Psoas muscle (tissue), 8 donors: ENCODE measurements at regions of chr17 and their contacts with region 1.

Region 1: GRCh38 chr17:44473367-44473766 is 29.8 kb downstream of the GPATCH8 start:
- DNase-seq: no peak
- ATAC-seq: peak in 2 of 4 donors; percentile 59 to 70
- H3K4me3 ChIP-seq: no peak overlapping the region
- H3K27ac ChIP-seq: no peak overlapping the region
- H3K4me1 ChIP-seq: peaks cover 28% of the 10 kb centered on the region
- H3K27me3 ChIP-seq: no peaks in the 10 kb centered on the region
- CTCF ChIP-seq: no peak

Region 2: GRCh38 chr17:44350733-44351226 is 122.6 kb before region 1 on chr17:
- intact Hi-C with region 1: no loop called
- DNase-seq: peak; percentile 60 to 75
- ATAC-seq: peak; percentile 57 to 68 (median 64)
- H3K4me3 ChIP-seq: no peak overlapping the region
- H3K27ac ChIP-seq: no peak overlapping the region
- H3K4me1 ChIP-seq: no peaks in the 10 kb centered on the region
- H3K27me3 ChIP-seq: peaks cover 0 to 1% (median 0%) of the 10 kb centered on the region in 3 donors
- CTCF ChIP-seq: peak; percentile 59

Region 3: GRCh38 chr17:44444735-44445105 is 28.6 kb before region 1 on chr17:
- intact Hi-C with region 1: loop called in 1 of 2 experiments (anchors 5 kb)
- DNase-seq: no peak
- ATAC-seq: peak in 2 of 4 donors; percentile 52 to 62
- H3K4me3 ChIP-seq: no peak overlapping the region
- H3K27ac ChIP-seq: peak overlapping the region; percentile 53
- H3K4me1 ChIP-seq: peaks cover 16% of the 10 kb centered on the region
- H3K27me3 ChIP-seq: no peaks in the 10 kb centered on the region
- CTCF ChIP-seq: no peak

Region 4: DNA sequence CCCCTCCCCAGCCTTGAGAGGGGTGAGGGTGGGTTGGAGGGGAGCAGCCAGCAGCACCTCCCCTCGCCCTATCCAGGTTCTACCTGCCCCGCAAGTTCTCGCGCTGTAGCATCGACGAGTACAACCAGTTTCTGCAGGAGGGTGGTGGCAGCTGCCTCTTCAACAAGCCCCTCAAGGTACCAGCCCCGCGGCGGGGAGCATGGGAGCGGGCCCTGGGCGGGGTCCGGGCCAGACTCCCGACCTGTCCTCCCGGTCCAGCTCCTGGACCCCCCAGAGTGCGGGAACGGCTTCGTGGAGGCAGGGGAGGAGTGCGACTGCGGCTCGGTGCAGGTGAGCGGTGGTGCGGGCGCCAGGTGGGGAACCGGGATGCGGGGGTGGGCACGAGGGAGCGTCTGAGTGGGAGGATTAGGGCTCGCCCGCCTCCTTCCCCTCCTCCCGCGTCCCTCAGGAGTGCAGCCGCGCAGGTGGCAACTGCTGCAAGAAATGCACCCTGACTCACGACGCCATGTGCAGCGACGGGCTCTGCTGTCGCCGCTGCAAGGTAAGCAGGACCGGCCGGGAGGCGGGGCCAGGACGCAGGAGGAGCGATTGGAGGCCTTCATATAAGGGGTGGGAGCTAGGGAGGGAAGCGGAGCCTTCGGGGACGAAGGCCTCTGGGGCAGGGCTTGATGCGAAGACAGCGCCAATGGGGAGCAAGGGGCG is 301.9 kb after region 1 on chr17:
- intact Hi-C with region 1: no loop called
- DNase-seq: peak; percentile 93 to 96
- ATAC-seq: peak; percentile 93 to 96 (median 95)
- H3K4me3 ChIP-seq: peak overlapping the region; percentile 66
- H3K27ac ChIP-seq: no peak overlapping the region
- H3K4me1 ChIP-seq: peaks cover 14% of the 10 kb centered on the region
- H3K27me3 ChIP-seq: peaks cover 0 to 20% (median 0%) of the 10 kb centered on the region in 3 donors
- CTCF ChIP-seq: no peak

Region 5: DNA sequence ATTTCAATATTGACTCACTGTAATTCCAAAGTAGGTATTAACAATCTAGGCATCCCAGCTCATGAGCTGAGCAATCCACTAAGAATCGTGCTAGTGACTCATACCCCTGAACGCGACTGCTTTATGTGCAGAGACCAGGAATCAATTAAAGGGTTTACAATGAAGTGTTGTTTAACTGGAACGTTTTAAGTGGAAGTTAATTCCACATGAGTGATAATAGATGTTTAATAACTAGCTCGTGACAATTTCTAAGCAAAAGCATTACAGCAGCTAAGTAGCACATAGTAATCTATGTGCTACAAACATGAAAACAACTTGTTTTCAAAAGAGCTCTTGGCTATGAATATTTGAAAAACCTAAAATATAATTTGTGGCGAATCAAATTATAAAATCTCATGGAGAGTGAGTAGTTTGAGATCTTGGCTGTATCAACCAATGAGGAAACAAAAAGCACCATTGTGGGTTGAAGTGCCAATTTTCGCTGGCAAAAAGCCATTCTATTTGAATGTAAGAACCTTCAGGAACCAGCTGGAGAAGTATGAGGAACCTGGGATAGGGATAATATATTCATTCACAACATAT is 347.4 kb after region 1 on chr17:
- intact Hi-C with region 1: no loop called
- DNase-seq: no peak
- ATAC-seq: no peak
- H3K4me3 ChIP-seq: no peak overlapping the region
- H3K27ac ChIP-seq: no peak overlapping the region
- H3K4me1 ChIP-seq: no peaks in the 10 kb centered on the region
- H3K27me3 ChIP-seq: peaks cover 0 to 41% (median 0%) of the 10 kb centered on the region in 3 donors
- CTCF ChIP-seq: no peak